ENCODE measurements at regions of chr10 and their contacts with region 1.

Region 1: DNA sequence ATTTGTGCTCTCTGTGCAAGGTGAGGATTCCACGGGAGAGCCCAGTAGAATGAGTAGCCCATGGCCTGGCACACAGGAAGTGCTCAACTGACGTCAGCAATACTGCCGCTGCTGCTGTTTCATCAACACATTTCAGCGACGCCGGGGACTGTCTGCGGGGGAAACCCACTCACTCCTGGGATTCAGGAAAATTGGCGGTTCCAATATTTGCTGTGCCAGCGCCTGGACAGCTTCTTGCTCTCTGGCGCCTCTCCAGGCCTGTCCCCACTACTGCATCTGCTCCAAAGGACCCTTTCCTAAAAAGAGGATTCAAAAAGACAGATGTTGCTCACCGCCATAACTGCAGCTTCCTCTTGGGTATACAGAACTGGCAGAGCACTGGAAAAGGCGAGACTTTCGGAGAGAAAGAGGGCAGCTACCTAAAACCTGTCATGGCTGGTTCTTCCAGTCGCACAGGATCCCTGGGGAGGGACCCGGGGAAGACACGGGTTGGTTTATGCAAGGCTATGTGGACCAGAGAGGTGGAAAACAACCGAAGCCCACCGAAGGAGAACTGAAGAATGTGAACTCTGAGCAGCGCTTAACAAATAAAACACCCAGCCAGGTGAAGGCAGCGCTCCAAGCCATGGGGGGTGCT is 39.7 kb upstream of the ENO4 start:
- DNase-seq: peak; percentile 58
- ATAC-seq: no peak

Region 2: GRCh38 chr10:116947842-116948529 is 138.4 kb after region 1 on chr10:
- intact Hi-C with region 1: no loop called
- DNase-seq: no peak
- ATAC-seq: peak; percentile 55

Region 3: GRCh38 chr10:117884093-117884492 is 1074.5 kb after region 1 on chr10:
- intact Hi-C with region 1: loop called (anchors 5 kb)
- DNase-seq: no peak
- ATAC-seq: no peak